Thyroid gland (tissue), 4 donors: ENCODE measurements at regions of chr14 and their contacts with region 1.

Region 1: DNA sequence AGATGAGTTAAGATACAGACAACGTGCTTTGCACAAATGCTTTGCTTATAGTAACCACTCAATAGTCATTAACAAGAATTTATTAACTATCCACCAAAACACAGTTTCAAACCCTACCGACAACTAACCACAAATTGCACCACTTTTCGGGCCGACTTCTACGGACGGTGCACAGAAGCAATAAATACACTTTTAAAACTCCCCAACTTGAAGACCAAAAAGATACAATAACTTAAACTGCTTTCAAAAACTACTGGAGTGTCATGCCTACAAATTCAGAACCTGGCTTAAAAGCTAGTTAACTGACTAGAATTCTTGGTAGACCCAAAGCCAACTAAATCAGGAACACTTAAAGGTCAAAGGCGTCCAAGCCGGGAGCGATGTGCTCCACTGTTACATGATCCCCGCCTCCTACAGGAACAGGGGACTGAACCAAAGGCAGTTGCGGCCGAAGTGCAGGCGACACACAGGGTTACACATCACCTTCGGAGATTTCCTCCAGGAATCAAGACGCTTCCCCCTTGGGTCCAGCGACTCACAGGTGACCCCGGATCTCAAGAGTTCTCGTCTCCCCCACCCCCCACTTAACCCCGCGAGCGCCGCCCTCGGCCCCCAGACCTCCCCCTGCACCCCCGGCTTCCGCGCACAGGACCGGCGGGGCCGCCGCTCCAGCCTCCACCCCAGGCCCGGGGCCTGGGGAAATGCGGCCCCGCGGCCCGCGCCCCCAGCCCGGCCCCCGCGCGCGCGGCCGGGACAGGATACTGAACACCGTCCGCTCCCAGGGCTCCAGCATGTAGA is 507 bp downstream of the SPTSSA start:
- DNase-seq: peak; percentile 66 to 71
- H3K4me3 ChIP-seq: peak overlapping the region; percentile 53 to 83 (median 75)
- H3K27ac ChIP-seq: peak overlapping the region; percentile 71 to 78 (median 77)
- H3K4me1 ChIP-seq: peaks cover 0 to 4% of the 10 kb centered on the region in 2 donors
- H3K27me3 ChIP-seq: no peaks in the 10 kb centered on the region
- CTCF ChIP-seq: no peak
- POLR2A ChIP-seq: no peak

Region 2: DNA sequence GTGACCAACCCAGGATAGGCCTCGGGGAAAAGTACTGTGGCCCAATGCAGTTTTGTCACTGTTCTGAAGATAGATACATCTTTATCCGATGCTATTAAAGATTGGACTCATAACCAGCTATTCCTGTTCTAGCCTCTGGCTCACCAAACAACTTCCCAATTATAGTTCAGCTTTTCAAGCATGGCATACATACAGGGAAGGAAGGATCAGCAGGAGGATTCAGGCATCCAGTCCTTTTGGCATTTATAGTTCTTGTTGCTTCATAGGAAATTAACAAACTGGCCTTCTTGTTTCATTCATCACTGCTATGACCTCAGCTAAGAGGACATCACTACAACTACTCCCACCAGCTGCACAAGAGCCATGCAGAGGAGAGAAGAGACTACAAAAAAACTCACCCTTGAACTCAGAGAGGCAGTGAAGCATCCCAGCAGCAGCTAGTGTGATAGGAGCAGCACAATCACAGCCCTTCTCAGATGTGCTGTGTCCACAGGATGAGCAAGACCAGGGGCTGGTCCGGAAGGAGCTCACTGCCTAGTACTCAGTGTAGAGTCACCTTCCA is 100.0 kb before region 1 on chr14:
- intact Hi-C with region 1: loop called (anchors 5 kb)
- DNase-seq: peak in 1 of 2 donors; percentile 30
- H3K4me3 ChIP-seq: no peak overlapping the region
- H3K27ac ChIP-seq: peak overlapping the region in 1 of 3 donors; percentile 44
- H3K4me1 ChIP-seq: peaks cover 10 to 17% of the 10 kb centered on the region in 2 donors
- H3K27me3 ChIP-seq: no peaks in the 10 kb centered on the region
- CTCF ChIP-seq: no peak
- POLR2A ChIP-seq: no peak

Region 3: GRCh38 chr14:34539407-34540180 is 78.1 kb after region 1 on chr14 and contains the start of gene EAPP:
- intact Hi-C with region 1: loop called (anchors 10 kb)
- DNase-seq: peak; percentile 98 to 99
- H3K4me3 ChIP-seq: peak within 1 kb of the TSS; percentile 83 to 98 (median 86)
- H3K27ac ChIP-seq: peak within 1 kb of the TSS; percentile 95 to 98 (median 97)
- H3K4me1 ChIP-seq: peaks cover 10 to 15% of the 10 kb centered on the region in 2 donors
- H3K27me3 ChIP-seq: no peaks in the 10 kb centered on the region
- CTCF ChIP-seq: peak in 2 of 6 experiments; percentile 16 to 30
- POLR2A ChIP-seq: peak; percentile 65 to 96
- total RNA-seq, gene EAPP: 45.2 to 68.7 (median 57.6) TPM

Region 4: GRCh38 chr14:34640826-34641225 is 179.3 kb after region 1 on chr14:
- intact Hi-C with region 1: no loop called
- DNase-seq: no peak
- H3K4me3 ChIP-seq: no peak overlapping the region
- H3K27ac ChIP-seq: no peak overlapping the region
- H3K4me1 ChIP-seq: no peaks in the 10 kb centered on the region
- H3K27me3 ChIP-seq: no peaks in the 10 kb centered on the region
- CTCF ChIP-seq: no peak
- POLR2A ChIP-seq: no peak